HepG2 (cell line): ENCODE measurements at regions of chr3 and their contacts with region 1.

Region 1: DNA sequence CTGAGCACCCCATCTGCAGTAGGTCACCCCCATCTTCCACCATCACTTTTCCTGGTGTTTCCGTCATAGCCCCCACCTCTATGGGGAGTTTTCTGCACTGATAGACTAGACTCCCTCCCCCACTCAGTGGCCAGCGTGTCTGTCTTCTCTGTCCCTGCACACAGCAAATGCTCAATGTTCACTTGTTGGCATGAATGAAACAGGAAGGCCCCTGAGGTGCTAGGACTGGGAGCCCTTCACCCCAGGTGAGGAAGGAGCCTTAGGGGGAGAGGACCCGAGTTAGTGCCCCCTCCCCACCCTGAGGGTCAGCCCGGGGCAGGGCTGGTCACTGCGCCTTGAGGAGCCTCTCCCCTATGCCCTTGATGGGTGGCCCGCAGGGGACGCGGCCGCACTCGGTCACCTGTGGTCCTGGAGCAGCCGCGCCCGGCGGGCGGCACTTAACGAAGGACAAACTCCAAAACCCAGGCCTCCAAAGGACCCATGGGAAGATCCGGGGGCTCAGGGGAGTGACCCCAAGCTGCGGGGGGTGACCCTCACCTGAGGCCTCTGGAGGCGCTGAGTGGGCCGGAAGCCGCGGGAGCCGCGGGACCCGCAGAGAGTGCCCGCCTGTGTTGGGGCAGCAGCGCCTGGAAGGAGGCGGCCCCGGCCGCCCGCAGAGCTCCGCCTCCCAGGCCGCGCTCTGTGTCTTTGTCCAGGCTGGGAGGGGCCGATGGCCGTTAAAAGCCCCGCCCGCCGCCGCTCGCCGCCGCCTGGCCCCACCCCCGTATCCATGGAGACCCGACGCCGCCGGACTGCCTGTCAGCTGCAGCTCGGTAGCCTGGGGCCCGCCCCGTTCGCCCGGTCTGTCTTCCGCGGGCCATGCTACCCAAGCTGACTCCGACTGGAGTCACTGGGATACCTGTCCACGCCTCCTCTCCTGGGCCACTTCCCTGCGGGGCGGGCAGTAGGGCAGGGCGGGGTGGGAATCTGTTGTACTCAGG is 15.5 kb upstream of the FANCD2 start:
- DNase-seq: peak; percentile 78
- ATAC-seq: peak; percentile 83
- H3K4me3 ChIP-seq: peak overlapping the region; percentile 60 to 84 (median 76)
- H3K27ac ChIP-seq: no peak overlapping the region
- H3K4me1 ChIP-seq: peaks cover 49% of the 10 kb centered on the region
- H3K27me3 ChIP-seq: no peaks in the 10 kb centered on the region; a peak in 1 of 5 replicates
- CTCF ChIP-seq: no peak
- EP300 ChIP-seq: no peak
- POLR2A ChIP-seq: peak in 1 of 2 experiments; percentile 61; a peak in 1 of 4 replicates
- RAD21 ChIP-seq: peak; percentile 40; the same call in 1 of the 2 replicates

Region 2: GRCh38 chr3:9976721-9977709 is 33.8 kb before region 1 on chr3:
- CTCF ChIA-PET with region 1: no interaction called
- POLR2A ChIA-PET with region 1: interaction called, 5 read pairs
- in situ Hi-C with region 1: no loop called
- intact Hi-C with region 1: loop called (anchors 2 kb)
- DNase-seq: peak; percentile 86
- ATAC-seq: peak; percentile 97
- H3K4me3 ChIP-seq: no peak overlapping the region
- H3K27ac ChIP-seq: peak overlapping the region; percentile 66
- H3K4me1 ChIP-seq: peaks cover 37% of the 10 kb centered on the region
- H3K27me3 ChIP-seq: no peaks in the 10 kb centered on the region
- CTCF ChIP-seq: no peak
- EP300 ChIP-seq: 0 out of 4 replicates have a peak, but pooled peaks of 1 of the 2 experiments have one; percentile 33
- POLR2A ChIP-seq: no peak
- RAD21 ChIP-seq: no peak

Region 3: GRCh38 chr3:10026084-10026890 is 15.5 kb after region 1 on chr3 and contains the start of gene FANCD2:
- CTCF ChIA-PET with region 1: no interaction called
- POLR2A ChIA-PET with region 1: interaction called, 12 read pairs
- in situ Hi-C with region 1: no loop called
- intact Hi-C with region 1: no loop called
- DNase-seq: peak; percentile 72
- ATAC-seq: peak; percentile 97
- H3K4me3 ChIP-seq: peak within 1 kb of the TSS; percentile 80 to 92 (median 90)
- H3K27ac ChIP-seq: peak within 1 kb of the TSS; percentile 68
- H3K4me1 ChIP-seq: peaks cover 18% of the 10 kb centered on the region
- H3K27me3 ChIP-seq: no peaks in the 10 kb centered on the region
- CTCF ChIP-seq: no peak; the same call in 1 of the 2 replicates
- EP300 ChIP-seq: no peak
- POLR2A ChIP-seq: peak; percentile 75 to 86
- RAD21 ChIP-seq: peak; percentile 55; the same call in 1 of the 2 replicates
- total RNA-seq, gene FANCD2: 42.0 and 51.9 TPM in 2 replicates

Region 4: DNA sequence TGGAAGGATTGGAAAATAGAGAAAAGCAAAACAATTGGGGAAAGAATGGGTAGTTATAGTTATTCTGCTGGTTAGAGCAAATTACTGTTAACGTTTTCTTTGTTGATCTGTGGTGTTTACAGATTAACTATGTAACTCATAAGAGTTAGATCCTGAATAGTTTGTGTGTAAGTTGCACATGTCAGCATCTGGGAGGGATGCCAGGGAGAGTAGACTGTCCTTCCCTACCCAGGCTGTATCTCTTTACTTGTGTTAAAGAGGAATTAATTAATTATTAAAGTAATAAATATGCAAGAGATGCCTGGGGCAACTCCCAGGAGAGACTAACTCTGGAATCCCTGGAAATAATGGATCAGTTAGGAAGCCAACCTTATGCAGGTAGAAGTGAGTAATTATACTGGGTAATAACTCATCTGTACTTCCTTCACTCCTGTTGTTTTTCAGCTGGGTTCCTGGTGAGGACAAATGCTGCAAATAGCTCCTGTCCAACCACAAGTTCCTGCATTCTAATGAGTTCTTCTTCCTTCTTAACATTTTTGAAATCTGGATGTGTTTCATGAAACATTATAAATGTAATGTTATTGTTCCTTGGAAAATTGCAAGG is 263.0 kb after region 1 on chr3:
- CTCF ChIA-PET with region 1: no interaction called
- POLR2A ChIA-PET with region 1: no interaction called
- in situ Hi-C with region 1: no loop called
- intact Hi-C with region 1: no loop called
- DNase-seq: no peak
- ATAC-seq: no peak
- H3K4me3 ChIP-seq: no peak overlapping the region
- H3K27ac ChIP-seq: no peak overlapping the region
- H3K4me1 ChIP-seq: peaks cover 10% of the 10 kb centered on the region
- H3K27me3 ChIP-seq: no peaks in the 10 kb centered on the region
- CTCF ChIP-seq: no peak
- EP300 ChIP-seq: no peak
- POLR2A ChIP-seq: no peak
- RAD21 ChIP-seq: no peak